Posterior cingulate gyrus (tissue), 11 donors: ENCODE measurements at regions of chr4 and their contacts with region 1.

Region 1: DNA sequence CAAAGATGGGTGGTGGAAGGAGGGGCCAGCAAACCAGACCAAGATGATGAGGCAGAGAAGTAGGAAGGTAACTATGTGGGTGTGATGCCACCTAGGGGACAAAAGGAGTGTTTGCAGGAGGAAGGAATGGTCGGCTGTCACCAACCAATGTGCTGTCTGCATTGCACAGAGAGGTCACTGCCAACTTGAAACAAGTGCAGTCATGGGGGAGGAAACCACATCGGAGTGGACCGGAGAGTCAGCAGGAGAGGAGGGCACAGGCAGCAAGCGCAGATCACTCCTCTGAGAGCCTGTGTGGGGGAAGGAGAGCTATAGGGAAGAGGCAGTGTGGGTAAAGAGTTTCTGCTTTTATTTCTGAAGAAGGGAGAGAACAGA is 38.5 kb upstream of the FGFBP2 start:
- DNase-seq: peak; percentile 26 to 95 (median 62)

Region 2: DNA sequence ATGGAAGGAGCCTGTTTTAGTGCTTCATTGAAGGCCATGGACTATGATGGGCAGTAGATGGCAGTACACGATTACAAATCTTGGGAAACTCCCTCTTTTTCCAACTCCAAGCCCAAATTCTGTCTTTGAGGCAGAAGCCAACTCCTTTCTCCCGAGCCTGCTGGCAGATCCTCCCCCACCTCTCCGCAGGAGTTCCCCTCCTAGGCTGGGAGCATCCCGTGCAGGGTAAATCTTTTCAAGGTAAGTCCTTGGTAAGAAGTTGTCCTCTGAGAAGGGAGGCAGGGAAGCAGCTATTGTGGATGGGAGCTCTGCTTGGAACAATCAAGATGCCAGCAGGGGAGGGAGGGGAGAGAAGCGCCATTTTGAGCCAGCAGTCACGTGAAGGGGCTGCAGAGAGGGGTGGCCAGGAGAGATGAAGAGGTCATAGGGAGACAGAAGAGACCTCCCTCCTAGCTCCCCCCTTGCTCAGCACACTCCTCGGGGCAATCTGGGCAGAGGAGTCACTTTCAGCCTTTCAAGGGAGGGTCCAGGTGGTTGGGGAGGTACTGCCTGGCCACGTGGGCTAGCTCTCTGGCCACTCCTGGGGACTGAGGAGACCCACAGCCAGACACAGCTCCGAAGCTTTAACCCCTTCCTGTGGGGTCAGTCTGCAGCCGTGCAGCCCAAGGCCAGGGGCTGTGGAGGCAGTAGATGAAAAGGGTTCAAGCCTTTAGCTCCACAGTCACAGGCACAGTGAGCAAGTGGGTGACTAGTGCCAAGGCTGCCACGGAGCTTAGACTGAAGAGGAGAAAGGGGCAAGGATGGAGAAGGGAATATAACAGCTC is 522.2 kb before region 1 on chr4:
- intact Hi-C with region 1: loop called (anchors 1 kb)
- DNase-seq: peak; percentile 15 to 90 (median 59)

Region 3: DNA sequence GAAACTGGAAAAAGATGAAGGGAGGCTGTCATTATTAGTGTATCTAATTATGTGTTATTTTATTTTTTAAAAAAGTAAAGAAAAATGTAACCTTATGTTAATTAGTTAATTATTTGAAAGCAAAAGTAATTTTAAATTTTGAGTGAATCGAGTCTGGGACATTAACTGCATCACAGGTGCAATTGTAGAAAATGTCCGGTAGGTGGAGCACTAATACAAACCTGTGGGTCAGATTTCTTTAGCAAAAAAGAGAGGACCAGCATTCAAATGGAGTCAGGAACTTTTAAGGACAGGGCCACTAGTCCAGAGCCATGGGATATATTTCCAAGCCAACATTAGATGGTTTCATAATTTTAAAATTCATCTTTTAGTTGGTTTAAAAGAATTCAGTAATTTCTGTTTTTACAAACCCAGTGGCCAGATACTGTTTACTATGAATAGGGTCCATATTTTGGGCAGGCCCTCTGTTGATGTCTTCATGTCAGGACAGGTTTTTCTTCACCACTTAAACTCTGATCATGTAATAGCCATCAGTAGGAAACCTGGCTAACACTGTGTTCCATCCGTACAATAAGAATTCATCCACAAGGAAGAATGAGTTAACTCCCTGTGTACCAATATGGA is 271.4 kb before region 1 on chr4:
- intact Hi-C with region 1: loop called (anchors 2 kb)
- DNase-seq: no peak

Region 4: DNA sequence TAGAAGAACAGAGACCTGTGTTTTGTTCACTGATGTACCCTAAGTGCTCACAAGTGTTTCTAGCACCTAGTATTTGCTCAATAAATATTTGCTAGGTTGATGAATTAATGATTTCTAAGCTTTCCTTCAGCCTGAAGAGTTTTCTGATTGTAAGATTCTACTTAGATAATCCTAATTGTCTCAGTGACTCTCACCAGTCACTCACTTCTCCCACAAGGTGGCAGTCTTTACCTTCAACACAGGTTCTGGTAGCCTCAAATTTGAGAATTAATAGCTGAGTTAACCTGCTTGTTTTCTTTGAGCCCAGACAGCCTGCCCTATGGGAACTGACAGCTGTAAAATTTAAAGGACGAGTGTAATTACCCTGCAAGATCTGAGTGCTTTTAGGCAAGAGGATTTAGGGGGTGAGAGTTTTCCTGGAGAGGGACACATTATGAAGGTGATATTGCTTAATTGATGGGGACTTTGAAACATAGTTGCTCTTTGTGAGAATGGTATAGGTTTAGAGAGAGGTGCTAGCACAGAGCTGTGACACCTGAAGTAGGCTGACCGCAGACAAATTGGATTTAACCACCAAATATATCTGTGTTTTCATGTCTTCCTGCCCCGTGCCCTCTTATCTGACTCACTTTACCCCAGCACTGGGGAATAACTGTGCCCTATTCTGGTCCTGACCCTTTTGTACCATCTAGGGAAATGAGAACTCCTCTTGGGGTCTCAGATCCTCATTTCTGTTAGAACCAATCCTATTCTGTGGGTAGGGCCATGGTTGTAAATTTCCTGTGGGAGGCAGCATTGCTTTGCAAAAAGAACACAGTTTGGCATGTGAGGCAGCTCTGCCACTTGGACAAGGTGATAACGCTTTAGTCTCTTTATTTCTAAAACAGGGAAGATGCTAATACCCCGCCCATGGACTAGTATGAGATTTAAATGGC is 195.6 kb before region 1 on chr4:
- intact Hi-C with region 1: loop called (anchors 2 kb)
- DNase-seq: peak in 2 of 10 donors; percentile 15 to 19

Region 5: DNA sequence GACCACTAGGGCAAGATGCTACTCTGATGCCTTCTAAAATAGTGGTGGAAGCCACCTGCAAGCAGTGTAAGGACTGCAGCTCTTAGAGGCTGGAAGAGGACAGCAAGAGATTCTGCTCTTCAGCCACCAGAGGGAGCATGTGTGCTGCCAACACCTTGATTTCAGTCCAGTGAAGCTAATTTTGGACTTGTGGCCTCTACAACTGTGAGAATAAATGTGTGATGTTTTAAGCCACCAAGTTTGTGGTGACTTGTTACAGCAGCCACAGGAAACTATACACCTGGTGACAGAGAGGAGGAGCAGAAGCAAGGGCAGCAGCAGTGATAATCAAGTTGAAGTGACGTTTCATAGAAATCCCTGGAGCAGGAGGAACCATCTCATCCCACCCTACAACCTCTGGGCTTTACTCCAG is 118.8 kb before region 1 on chr4:
- intact Hi-C with region 1: loop called (anchors 1 kb)
- DNase-seq: peak in 8 of 10 donors; percentile 13 to 91 (median 37)